ENCODE measurements at regions of chr19 and their contacts with region 1.

Region 1: DNA sequence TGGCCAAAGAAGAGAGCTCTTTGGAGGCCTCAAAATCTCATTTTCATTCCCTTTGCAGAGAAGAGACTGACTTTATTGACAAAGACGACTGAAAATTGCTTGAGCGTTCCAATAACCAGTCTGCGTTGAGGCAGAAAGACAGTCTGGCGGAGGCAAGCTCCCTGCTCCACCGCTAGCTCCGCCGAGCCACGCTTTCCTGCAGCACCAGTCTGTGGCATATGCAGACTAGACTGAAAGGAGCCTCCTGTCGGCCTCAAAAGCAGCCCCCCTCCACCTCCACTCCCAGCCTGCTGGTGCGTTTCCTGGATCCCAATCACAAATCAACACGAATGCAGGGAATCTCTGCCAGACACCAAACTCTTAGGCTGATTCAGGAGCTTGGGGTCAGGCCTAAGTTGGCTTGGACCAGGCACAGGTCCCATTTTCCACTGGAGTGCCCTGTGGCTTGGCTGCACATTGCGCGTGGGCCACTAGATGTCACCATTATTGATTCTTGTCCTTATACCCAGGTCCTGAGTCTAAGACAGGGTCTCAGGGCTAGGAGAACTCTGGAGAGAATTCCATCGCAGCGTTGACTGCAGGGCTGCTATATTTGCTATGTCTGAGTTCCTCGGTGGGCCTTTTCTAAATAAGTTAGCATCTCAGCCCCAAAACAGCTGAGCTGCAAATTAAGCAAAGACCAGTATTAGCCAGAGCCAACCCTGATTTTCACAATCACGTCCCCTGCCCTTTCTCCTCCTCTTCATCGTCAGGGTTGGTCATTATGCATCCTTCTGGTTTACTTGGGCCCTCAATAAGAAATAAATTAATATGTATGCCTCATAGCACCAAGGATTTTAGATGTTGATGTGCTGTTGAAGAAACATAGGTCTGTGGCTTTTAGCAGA is 5.2 kb upstream of the ZNF507 start:
- DNase-seq: peak; percentile 70 to 83 (median 74)
- ATAC-seq: peak; percentile 91
- H3K4me3 ChIP-seq: no peak overlapping the region
- H3K27ac ChIP-seq: no peak overlapping the region
- H3K4me1 ChIP-seq: peaks cover 3% of the 10 kb centered on the region
- H3K27me3 ChIP-seq: no peaks in the 10 kb centered on the region
- CTCF ChIP-seq: peak; percentile 44 to 72 (median 69)
- POLR2A ChIP-seq: no peak

Region 2: GRCh38 chr19:32296694-32297093 is 43.5 kb before region 1 on chr19:
- intact Hi-C with region 1: no loop called
- DNase-seq: no peak
- ATAC-seq: no peak
- H3K4me3 ChIP-seq: no peak overlapping the region
- H3K27ac ChIP-seq: no peak overlapping the region
- H3K4me1 ChIP-seq: no peaks in the 10 kb centered on the region
- H3K27me3 ChIP-seq: no peaks in the 10 kb centered on the region
- CTCF ChIP-seq: no peak
- POLR2A ChIP-seq: no peak

Region 3: DNA sequence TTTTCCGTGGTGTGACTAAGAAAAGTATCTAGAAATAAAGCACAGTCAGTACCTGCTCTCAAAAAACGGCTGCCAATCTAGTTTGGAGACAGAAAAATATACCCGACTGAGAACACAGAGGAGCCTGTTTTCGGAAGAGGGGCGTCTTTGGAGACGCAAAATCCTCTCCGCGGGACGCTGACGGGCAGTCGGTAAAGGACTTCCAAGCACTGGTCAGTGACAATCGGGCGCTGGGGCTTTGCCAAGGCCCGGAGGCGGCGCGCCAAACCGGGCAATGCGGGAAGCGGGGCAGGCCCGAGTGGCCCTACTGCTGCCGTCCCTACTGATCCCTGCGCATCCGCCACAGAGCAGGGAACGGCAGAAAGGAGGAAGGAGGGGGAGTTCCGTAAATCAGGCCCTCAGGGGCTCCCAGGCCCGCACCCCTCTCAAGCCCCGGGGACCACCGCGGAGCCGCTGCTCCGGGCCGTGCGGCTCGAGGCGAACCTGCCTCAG is 64.8 kb after region 1 on chr19:
- intact Hi-C with region 1: loop called (anchors 5 kb)
- DNase-seq: peak; percentile 63 to 78 (median 70)
- ATAC-seq: peak; percentile 46
- H3K4me3 ChIP-seq: peak overlapping the region; percentile 57 to 96
- H3K27ac ChIP-seq: peak overlapping the region; percentile 90 to 96 (median 94)
- H3K4me1 ChIP-seq: peaks cover 30% of the 10 kb centered on the region
- H3K27me3 ChIP-seq: no peaks in the 10 kb centered on the region
- CTCF ChIP-seq: no peak
- POLR2A ChIP-seq: no peak

Region 4: GRCh38 chr19:32566246-32566830 is 226.1 kb after region 1 on chr19:
- intact Hi-C with region 1: loop called (anchors 10 kb)
- DNase-seq: no peak
- ATAC-seq: no peak
- H3K4me3 ChIP-seq: no peak overlapping the region
- H3K27ac ChIP-seq: no peak overlapping the region
- H3K4me1 ChIP-seq: no peaks in the 10 kb centered on the region
- H3K27me3 ChIP-seq: no peaks in the 10 kb centered on the region
- CTCF ChIP-seq: no peak
- POLR2A ChIP-seq: no peak

Region 5: GRCh38 chr19:32576790-32577189 is 236.6 kb after region 1 on chr19:
- intact Hi-C with region 1: no loop called
- DNase-seq: no peak
- ATAC-seq: no peak
- H3K4me3 ChIP-seq: no peak overlapping the region
- H3K27ac ChIP-seq: no peak overlapping the region
- H3K4me1 ChIP-seq: peaks cover 6% of the 10 kb centered on the region
- H3K27me3 ChIP-seq: no peaks in the 10 kb centered on the region
- CTCF ChIP-seq: no peak
- POLR2A ChIP-seq: no peak